ENCODE measurements at regions of chr2 and their contacts with region 1.

Region 1: GRCh38 chr2:150610671-150611279 is 123.3 kb upstream of the RND3 start:
- DNase-seq: peak; percentile 59 to 77
- H3K4me3 ChIP-seq: no peak overlapping the region
- H3K4me3 Mint-ChIP-seq: no peak overlapping the region
- H3K27ac Mint-ChIP-seq: no peak overlapping the region
- H3K4me1 ChIP-seq: peaks cover 16% of the 10 kb centered on the region
- H3K4me1 Mint-ChIP-seq: peaks cover 13% of the 10 kb centered on the region
- H3K27me3 ChIP-seq: no peaks in the 10 kb centered on the region
- H3K27me3 Mint-ChIP-seq: no peaks in the 10 kb centered on the region
- CTCF ChIP-seq: peak; percentile 76 to 85

Region 2: GRCh38 chr2:150133623-150134022 is 477.2 kb before region 1 on chr2:
- CTCF ChIA-PET with region 1: no interaction called
- POLR2A ChIA-PET with region 1: no interaction called
- intact Hi-C with region 1: loop called (anchors 10 kb)
- DNase-seq: peak; percentile 55 to 58
- H3K4me3 ChIP-seq: no peak overlapping the region
- H3K4me3 Mint-ChIP-seq: no peak overlapping the region
- H3K27ac Mint-ChIP-seq: no peak overlapping the region
- H3K4me1 ChIP-seq: peaks cover 43% of the 10 kb centered on the region
- H3K4me1 Mint-ChIP-seq: peaks cover 34% of the 10 kb centered on the region
- H3K27me3 ChIP-seq: no peaks in the 10 kb centered on the region
- H3K27me3 Mint-ChIP-seq: no peaks in the 10 kb centered on the region
- CTCF ChIP-seq: no peak

Region 3: GRCh38 chr2:150271952-150272802 is 338.6 kb before region 1 on chr2:
- CTCF ChIA-PET with region 1: no interaction called
- POLR2A ChIA-PET with region 1: no interaction called
- intact Hi-C with region 1: no loop called
- DNase-seq: no peak
- H3K4me3 ChIP-seq: no peak overlapping the region
- H3K4me3 Mint-ChIP-seq: no peak overlapping the region
- H3K27ac Mint-ChIP-seq: no peak overlapping the region
- H3K4me1 ChIP-seq: peaks cover 13% of the 10 kb centered on the region; the same call in 1 of the 2 replicates
- H3K4me1 Mint-ChIP-seq: peaks cover 9% of the 10 kb centered on the region
- H3K27me3 ChIP-seq: no peaks in the 10 kb centered on the region
- H3K27me3 Mint-ChIP-seq: no peaks in the 10 kb centered on the region
- CTCF ChIP-seq: no peak

Region 4: GRCh38 chr2:150526827-150527226 is 83.9 kb before region 1 on chr2:
- CTCF ChIA-PET with region 1: no interaction called
- POLR2A ChIA-PET with region 1: no interaction called
- intact Hi-C with region 1: loop called (anchors 1 kb)
- DNase-seq: peak; percentile 77 to 79
- H3K4me3 ChIP-seq: no peak overlapping the region
- H3K4me3 Mint-ChIP-seq: peak overlapping the region; percentile 28
- H3K27ac Mint-ChIP-seq: peak overlapping the region; percentile 86
- H3K4me1 ChIP-seq: peaks cover 49% of the 10 kb centered on the region
- H3K4me1 Mint-ChIP-seq: peaks cover 28% of the 10 kb centered on the region
- H3K27me3 ChIP-seq: no peaks in the 10 kb centered on the region
- H3K27me3 Mint-ChIP-seq: no peaks in the 10 kb centered on the region
- CTCF ChIP-seq: no peak

Region 5: DNA sequence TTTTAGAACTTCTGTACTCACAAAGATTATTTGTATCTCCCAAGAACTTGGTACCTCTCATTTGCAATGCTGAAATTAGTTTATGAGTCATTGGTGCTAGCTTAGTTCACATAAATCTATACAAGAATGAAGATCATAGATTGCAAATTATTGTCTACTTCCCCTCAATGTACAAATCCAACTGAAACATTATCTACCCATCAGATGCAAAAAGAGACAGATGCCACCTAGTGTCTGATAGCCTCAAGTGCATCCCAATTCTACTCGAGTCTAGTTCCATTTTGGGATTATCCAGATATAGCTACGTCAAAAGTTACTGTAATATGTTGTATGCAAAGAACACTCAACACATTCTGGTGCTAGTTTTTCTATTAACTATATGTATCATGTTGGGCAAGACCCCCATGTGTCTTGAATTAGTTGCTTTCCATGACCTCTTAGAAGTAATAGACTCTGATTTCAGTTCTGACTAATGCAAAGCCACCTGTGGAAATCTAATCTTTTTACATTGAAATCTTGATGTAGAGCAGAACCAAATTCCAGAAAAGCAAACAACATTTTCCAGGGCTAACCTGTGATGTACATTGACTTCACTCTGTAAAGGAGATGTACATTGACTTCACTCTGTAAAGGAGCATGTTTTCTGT is 440.9 kb after region 1 on chr2:
- CTCF ChIA-PET with region 1: no interaction called
- POLR2A ChIA-PET with region 1: no interaction called
- intact Hi-C with region 1: loop called (anchors 10 kb)
- DNase-seq: peak; percentile 45
- H3K4me3 ChIP-seq: no peak overlapping the region
- H3K4me3 Mint-ChIP-seq: no peak overlapping the region
- H3K27ac Mint-ChIP-seq: no peak overlapping the region
- H3K4me1 ChIP-seq: peaks cover 10% of the 10 kb centered on the region
- H3K4me1 Mint-ChIP-seq: no peaks in the 10 kb centered on the region
- H3K27me3 ChIP-seq: peaks cover 1% of the 10 kb centered on the region; the same call in 1 of the 2 replicates
- H3K27me3 Mint-ChIP-seq: peaks cover 5% of the 10 kb centered on the region
- CTCF ChIP-seq: peak; percentile 58 to 79

Region 6: DNA sequence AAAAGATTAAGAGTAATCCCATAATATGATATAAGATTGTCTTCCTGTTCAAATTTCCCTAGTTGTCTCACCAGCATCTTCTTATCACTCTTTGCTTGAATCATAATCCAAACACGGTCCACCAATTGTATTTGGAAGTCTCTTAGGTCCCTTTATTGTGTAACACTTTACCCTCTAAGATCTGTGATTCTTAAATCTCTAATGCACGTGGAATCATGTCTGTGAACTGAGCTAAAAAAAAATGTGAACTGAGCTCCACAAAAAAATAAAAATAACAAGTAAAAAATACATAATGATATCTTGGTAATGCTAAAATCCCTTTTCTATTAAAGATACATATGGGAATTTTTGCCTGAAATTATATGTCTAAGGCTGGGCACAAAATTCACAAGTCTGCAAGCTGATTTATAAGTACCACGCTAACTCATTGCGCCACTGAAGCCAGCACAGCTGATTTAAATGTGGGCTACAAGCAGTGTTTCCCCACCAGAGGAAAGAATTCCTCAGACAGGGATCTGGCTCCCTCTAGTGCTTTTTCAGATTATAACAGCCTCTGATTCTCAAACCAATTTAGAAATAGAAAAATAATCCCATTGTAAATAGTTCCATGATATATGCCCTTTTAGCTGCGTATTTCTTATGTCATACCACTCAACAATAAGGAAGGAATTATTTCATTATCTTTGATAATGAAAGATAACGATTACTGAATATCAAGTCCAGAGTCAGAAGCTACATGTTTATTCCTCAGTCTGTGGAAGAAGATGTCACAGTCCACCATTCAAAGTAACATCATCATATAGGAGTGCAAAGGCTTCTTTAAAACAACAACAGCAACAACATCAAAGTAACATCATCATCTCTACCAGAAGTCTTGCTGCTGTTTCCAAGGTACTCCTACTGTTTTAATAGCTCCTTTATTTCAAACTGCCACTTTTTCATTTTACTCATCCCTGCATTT is 628.0 kb after region 1 on chr2:
- CTCF ChIA-PET with region 1: no interaction called
- POLR2A ChIA-PET with region 1: no interaction called
- intact Hi-C with region 1: loop called (anchors 5 kb)
- DNase-seq: peak; percentile 51 to 69
- H3K4me3 ChIP-seq: no peak overlapping the region
- H3K4me3 Mint-ChIP-seq: no peak overlapping the region
- H3K27ac Mint-ChIP-seq: no peak overlapping the region
- H3K4me1 ChIP-seq: no peaks in the 10 kb centered on the region
- H3K4me1 Mint-ChIP-seq: no peaks in the 10 kb centered on the region
- H3K27me3 ChIP-seq: no peaks in the 10 kb centered on the region; the same call in 1 of the 2 replicates
- H3K27me3 Mint-ChIP-seq: peaks cover 5% of the 10 kb centered on the region
- CTCF ChIP-seq: peak; percentile 74 to 87